Dendritic cell treated with granulocyte-macrophage colony-stimulating factor and Interleukin-4, amounts not matched to agents 40 ng/mL and 50 ng/mL, for 4 days (primary cell): ENCODE measurements at regions of chr14 and their contacts with region 1.

Region 1: GRCh38 chr14:76386915-76387782 is 11.2 kb downstream of the ESRRB start:
- H3K4me3 Mint-ChIP-seq: no peak overlapping the region
- H3K27ac Mint-ChIP-seq: no peak overlapping the region
- H3K4me1 Mint-ChIP-seq: no peaks in the 10 kb centered on the region
- H3K27me3 Mint-ChIP-seq: peaks cover 42% of the 10 kb centered on the region

Region 2: GRCh38 chr14:75709207-75709812 is 677.8 kb before region 1 on chr14:
- intact Hi-C with region 1: loop called (anchors 5 kb)
- H3K4me3 Mint-ChIP-seq: no peak overlapping the region
- H3K27ac Mint-ChIP-seq: no peak overlapping the region
- H3K4me1 Mint-ChIP-seq: no peaks in the 10 kb centered on the region
- H3K27me3 Mint-ChIP-seq: no peaks in the 10 kb centered on the region

Region 3: DNA sequence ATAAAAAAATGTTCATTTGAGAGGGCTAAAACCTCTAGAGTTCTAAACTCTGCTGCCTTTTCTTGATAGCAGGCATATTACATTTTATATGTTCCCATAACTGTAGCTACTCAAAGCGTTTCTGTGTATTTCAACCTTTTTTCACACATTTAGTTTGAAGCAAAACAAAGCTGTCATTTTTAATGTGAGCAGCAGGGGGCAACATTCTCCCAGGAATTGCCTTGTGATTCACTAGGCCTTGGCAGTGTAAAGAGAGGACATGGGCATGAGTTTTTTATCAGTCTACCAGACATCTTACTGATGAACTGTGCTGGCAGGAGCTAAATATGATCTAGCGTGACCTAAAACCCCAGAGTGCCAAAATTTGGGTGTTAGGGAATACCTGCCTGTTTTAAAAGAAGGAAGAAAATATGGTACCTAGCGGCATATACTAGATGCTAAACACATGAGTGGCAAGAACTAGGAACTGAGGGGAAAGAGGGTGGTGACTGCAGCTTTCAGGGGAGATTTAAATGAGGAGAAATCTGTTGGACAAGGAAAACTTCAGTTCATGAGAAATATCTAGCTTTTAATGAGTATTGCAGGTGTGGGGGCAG is 336.3 kb before region 1 on chr14:
- intact Hi-C with region 1: loop called (anchors 1 kb)
- H3K4me3 Mint-ChIP-seq: no peak overlapping the region
- H3K27ac Mint-ChIP-seq: no peak overlapping the region
- H3K4me1 Mint-ChIP-seq: peaks cover 16% of the 10 kb centered on the region
- H3K27me3 Mint-ChIP-seq: no peaks in the 10 kb centered on the region

Region 4: DNA sequence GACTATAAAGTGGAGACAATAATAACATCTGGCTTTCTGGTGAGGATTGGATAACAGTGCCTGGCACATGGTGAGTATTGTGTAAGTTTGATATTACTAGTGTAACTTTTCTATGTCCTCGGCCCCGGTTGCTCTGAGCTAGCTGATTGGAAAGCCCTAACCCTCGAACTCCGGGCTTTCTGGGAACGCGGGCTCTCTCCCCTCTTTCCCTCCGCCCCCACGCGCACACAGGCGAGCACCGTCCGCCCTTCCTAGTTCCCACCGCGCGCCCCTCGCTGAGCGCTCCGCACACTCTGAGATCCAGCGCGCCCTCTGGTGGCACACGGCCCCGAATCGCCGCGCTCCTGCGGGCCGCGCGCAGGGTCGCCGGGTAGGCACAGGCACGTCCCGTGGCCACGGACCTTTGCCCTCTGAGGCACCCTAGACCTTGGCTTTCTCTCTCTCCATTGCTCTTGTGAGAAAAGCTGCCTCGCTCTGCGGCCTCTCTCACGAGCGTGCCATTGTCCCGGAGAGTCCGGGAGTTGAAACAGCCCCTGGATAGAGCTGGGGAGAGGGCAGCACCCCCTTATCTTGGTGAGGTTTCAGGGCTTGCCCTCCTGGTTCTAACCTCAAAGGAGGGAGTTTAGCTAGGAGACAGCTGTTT is 34.4 kb before region 1 on chr14:
- intact Hi-C with region 1: loop called (anchors 5 kb)
- H3K4me3 Mint-ChIP-seq: peak overlapping the region; percentile 59
- H3K27ac Mint-ChIP-seq: no peak overlapping the region
- H3K4me1 Mint-ChIP-seq: peaks cover 5% of the 10 kb centered on the region
- H3K27me3 Mint-ChIP-seq: peaks cover 32% of the 10 kb centered on the region

Region 5: DNA sequence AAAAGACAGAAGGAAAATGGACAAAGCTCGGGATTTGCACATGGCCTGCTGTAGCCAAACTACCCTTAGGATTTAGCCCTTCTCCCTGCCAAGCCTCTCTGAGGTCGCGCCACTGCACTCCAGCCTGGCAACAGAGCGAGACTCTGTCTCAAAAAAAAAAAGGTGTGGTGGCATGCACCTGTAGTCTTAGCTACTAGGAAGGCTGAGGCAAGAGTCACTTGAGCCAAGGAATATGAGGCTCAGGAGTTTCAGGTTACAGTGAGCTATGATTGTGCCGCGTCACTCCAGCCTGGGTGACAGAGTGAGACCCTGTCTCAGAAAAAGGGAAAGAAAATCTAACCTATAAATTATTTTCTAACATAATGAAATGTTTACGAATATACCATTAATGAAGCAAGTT is 18.5 kb after region 1 on chr14:
- intact Hi-C with region 1: no loop called
- H3K4me3 Mint-ChIP-seq: no peak overlapping the region
- H3K27ac Mint-ChIP-seq: no peak overlapping the region
- H3K4me1 Mint-ChIP-seq: no peaks in the 10 kb centered on the region
- H3K27me3 Mint-ChIP-seq: peaks cover 21% of the 10 kb centered on the region